ENCODE measurements at regions of chr2 and their contacts with region 1.

Region 1: GRCh38 chr2:56666777-56667176 is 483.0 kb downstream of the CCDC85A start:
- DNase-seq: no peak
- ATAC-seq: no peak
- H3K4me3 ChIP-seq: no peak overlapping the region
- H3K27ac ChIP-seq: no peak overlapping the region
- H3K4me1 ChIP-seq: no peaks in the 10 kb centered on the region
- H3K27me3 ChIP-seq: no peaks in the 10 kb centered on the region
- CTCF ChIP-seq: no peak
- EP300 ChIP-seq: no peak
- POLR2A ChIP-seq: no peak
- RAD21 ChIP-seq: no peak

Region 2: DNA sequence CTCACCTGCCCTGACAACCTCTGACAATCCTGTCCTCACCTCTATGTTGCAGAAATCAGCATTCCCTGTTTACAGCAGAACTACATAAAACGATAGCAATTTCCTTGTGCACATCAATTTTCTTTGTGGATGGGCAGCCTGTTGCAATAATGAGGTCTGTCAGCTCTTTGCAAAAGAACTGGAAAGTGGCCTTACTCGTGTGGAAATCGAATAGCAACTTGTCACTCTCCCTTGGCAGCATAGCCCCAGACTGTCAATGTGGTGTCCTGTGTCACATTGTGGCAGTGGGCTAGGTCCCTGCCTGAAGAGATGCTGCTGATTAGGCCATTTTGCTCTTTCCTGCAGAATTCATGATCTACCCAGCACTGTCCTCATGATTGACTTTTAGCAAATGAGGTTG is 48.9 kb after region 1 on chr2:
- CTCF ChIA-PET with region 1: no interaction called
- POLR2A ChIA-PET with region 1: no interaction called
- RAD21 ChIA-PET with region 1: no interaction called
- SMC1A ChIA-PET with region 1: no interaction called
- in situ Hi-C with region 1: no loop called
- intact Hi-C with region 1: loop called (anchors 5 kb)
- DNase-seq: no peak
- ATAC-seq: no peak
- H3K4me3 ChIP-seq: no peak overlapping the region
- H3K27ac ChIP-seq: no peak overlapping the region
- H3K4me1 ChIP-seq: no peaks in the 10 kb centered on the region
- H3K27me3 ChIP-seq: no peaks in the 10 kb centered on the region
- CTCF ChIP-seq: no peak
- EP300 ChIP-seq: no peak
- POLR2A ChIP-seq: no peak
- RAD21 ChIP-seq: no peak

Measured in GM12878 (cell line).